Endothelial cell of umbilical vein (primary cell): ENCODE measurements at regions of chr12 and their contacts with region 1.

Region 1: GRCh38 chr12:13079440-13079906 is 24.0 kb downstream of the GSG1 start:
- DNase-seq: peak; percentile 98
- H3K4me3 ChIP-seq: no peak overlapping the region
- H3K27ac ChIP-seq: peak overlapping the region; percentile 69
- H3K4me1 ChIP-seq: peaks cover 12% of the 10 kb centered on the region
- H3K27me3 ChIP-seq: no peaks in the 10 kb centered on the region
- CTCF ChIP-seq: peak; percentile 64 to 76
- POLR2A ChIP-seq: no peak

Region 2: DNA sequence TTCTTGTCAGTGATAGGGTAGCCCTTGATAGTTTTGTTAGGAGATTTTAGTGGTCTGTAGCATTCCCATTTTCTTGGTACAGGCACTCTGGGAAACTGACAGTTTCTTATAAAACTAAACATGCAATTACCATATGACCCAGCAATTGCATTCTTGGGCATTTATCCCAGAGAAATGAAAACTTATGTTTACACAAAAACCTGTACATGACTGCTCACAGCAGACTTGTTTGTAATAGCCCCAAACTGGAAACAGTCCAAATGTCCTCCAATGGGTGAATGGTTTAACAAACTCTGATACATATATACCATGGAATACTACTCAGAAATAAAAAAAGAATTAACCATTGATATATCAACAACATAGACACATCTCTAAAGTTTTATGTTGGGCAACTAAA is 647.1 kb before region 1 on chr12:
- CTCF ChIA-PET with region 1: no interaction called
- POLR2A ChIA-PET with region 1: no interaction called
- dilution Hi-C with region 1: no loop called
- intact Hi-C with region 1: no loop called
- DNase-seq: peak; percentile 75
- H3K4me3 ChIP-seq: no peak overlapping the region
- H3K27ac ChIP-seq: no peak overlapping the region
- H3K4me1 ChIP-seq: peaks cover 5% of the 10 kb centered on the region
- H3K27me3 ChIP-seq: no peaks in the 10 kb centered on the region
- CTCF ChIP-seq: no peak
- POLR2A ChIP-seq: no peak

Region 3: GRCh38 chr12:12999959-13000615 is 79.4 kb before region 1 on chr12 and contains the start of gene HEBP1:
- CTCF ChIA-PET with region 1: interaction called, 4 read pairs
- POLR2A ChIA-PET with region 1: no interaction called
- dilution Hi-C with region 1: no loop called
- intact Hi-C with region 1: loop called (anchors 1 kb)
- DNase-seq: peak; percentile 89
- H3K4me3 ChIP-seq: peak within 1 kb of the TSS; percentile 55 to 87 (median 85)
- H3K27ac ChIP-seq: peak within 1 kb of the TSS; percentile 71
- H3K4me1 ChIP-seq: peaks cover 22% of the 10 kb centered on the region
- H3K27me3 ChIP-seq: no peaks in the 10 kb centered on the region
- CTCF ChIP-seq: no peak
- POLR2A ChIP-seq: peak; percentile 91
- total RNA-seq, gene HEBP1: 44.8 and 59.5 TPM in 2 replicates

Region 4: GRCh38 chr12:13049816-13050215 is 29.7 kb before region 1 on chr12:
- CTCF ChIA-PET with region 1: interaction called, 20 read pairs
- POLR2A ChIA-PET with region 1: no interaction called
- dilution Hi-C with region 1: no loop called
- intact Hi-C with region 1: loop called (anchors 2 kb)
- DNase-seq: peak; percentile 66
- H3K4me3 ChIP-seq: no peak overlapping the region
- H3K27ac ChIP-seq: no peak overlapping the region
- H3K4me1 ChIP-seq: peaks cover 10% of the 10 kb centered on the region
- H3K27me3 ChIP-seq: no peaks in the 10 kb centered on the region
- CTCF ChIP-seq: no peak
- POLR2A ChIP-seq: no peak

Region 5: GRCh38 chr12:13124661-13125505 is 45.4 kb after region 1 on chr12:
- CTCF ChIA-PET with region 1: interaction called, 13 read pairs
- POLR2A ChIA-PET with region 1: no interaction called
- dilution Hi-C with region 1: no loop called
- intact Hi-C with region 1: loop called (anchors 2 kb)
- DNase-seq: peak; percentile 89
- H3K4me3 ChIP-seq: no peak overlapping the region
- H3K27ac ChIP-seq: peak overlapping the region; percentile 90
- H3K4me1 ChIP-seq: peaks cover 20% of the 10 kb centered on the region
- H3K27me3 ChIP-seq: no peaks in the 10 kb centered on the region
- CTCF ChIP-seq: no peak
- POLR2A ChIP-seq: peak; percentile 45

Region 6: GRCh38 chr12:13203034-13203922 is 123.8 kb after region 1 on chr12:
- CTCF ChIA-PET with region 1: interaction called, 9 read pairs
- POLR2A ChIA-PET with region 1: interaction called, 3 read pairs
- dilution Hi-C with region 1: no loop called
- intact Hi-C with region 1: loop called (anchors 1 kb)
- DNase-seq: peak; percentile 46
- H3K4me3 ChIP-seq: no peak overlapping the region
- H3K27ac ChIP-seq: peak overlapping the region; percentile 97
- H3K4me1 ChIP-seq: peaks cover 90% of the 10 kb centered on the region
- H3K27me3 ChIP-seq: no peaks in the 10 kb centered on the region
- CTCF ChIP-seq: peak; percentile 28 to 46
- POLR2A ChIP-seq: no peak

Region 7: DNA sequence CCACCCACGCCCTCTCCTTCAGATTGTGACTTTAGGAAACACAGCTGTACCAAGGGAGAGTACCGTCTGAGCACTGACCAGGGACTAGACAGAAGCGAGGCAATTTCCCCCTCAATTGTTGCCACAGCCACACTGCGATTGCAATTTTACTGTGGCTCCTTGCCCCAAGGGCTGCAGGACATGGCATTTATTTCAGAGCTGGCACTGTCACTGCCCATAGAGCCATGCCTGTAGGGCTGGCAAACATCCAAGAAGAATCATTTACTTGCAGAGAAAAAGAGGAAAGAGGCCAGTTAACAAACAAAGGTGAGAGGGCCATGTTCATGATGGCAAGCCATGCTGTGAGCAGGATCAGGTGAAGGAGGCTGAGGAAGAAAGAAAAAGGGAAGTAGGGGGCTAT is 246.6 kb after region 1 on chr12:
- CTCF ChIA-PET with region 1: no interaction called
- POLR2A ChIA-PET with region 1: no interaction called
- dilution Hi-C with region 1: no loop called
- intact Hi-C with region 1: no loop called
- DNase-seq: no peak
- H3K4me3 ChIP-seq: no peak overlapping the region
- H3K27ac ChIP-seq: no peak overlapping the region
- H3K4me1 ChIP-seq: no peaks in the 10 kb centered on the region
- H3K27me3 ChIP-seq: peaks cover 0 to 3% of the 10 kb centered on the region in 2 experiments
- CTCF ChIP-seq: no peak
- POLR2A ChIP-seq: no peak